ENCODE measurements at regions of chr7 and their contacts with region 1.

Region 1: GRCh38 chr7:55912748-55913158 is 25.5 kb downstream of the ZNF713 start:
- DNase-seq: no peak
- ATAC-seq: no peak
- H3K4me3 ChIP-seq: no peak overlapping the region
- H3K4me3 Mint-ChIP-seq: no peak overlapping the region
- H3K27ac ChIP-seq: no peak overlapping the region
- H3K27ac Mint-ChIP-seq: no peak overlapping the region
- H3K4me1 ChIP-seq: no peaks in the 10 kb centered on the region
- H3K4me1 Mint-ChIP-seq: no peaks in the 10 kb centered on the region
- H3K27me3 ChIP-seq: no peaks in the 10 kb centered on the region
- H3K27me3 Mint-ChIP-seq: no peaks in the 10 kb centered on the region
- CTCF ChIP-seq: no peak

Region 2: GRCh38 chr7:55784151-55784550 is 128.6 kb before region 1 on chr7:
- CTCF ChIA-PET with region 1: no interaction called
- POLR2A ChIA-PET with region 1: no interaction called
- intact Hi-C with region 1: loop called in 1 of 2 experiments (anchors 10 kb)
- DNase-seq: no peak
- ATAC-seq: no peak
- H3K4me3 ChIP-seq: no peak overlapping the region
- H3K4me3 Mint-ChIP-seq: no peak overlapping the region
- H3K27ac ChIP-seq: no peak overlapping the region
- H3K27ac Mint-ChIP-seq: no peak overlapping the region
- H3K4me1 ChIP-seq: no peaks in the 10 kb centered on the region
- H3K4me1 Mint-ChIP-seq: no peaks in the 10 kb centered on the region
- H3K27me3 ChIP-seq: peaks cover 0 to 2% of the 10 kb centered on the region in 2 experiments
- H3K27me3 Mint-ChIP-seq: no peaks in the 10 kb centered on the region
- CTCF ChIP-seq: no peak

Region 3: GRCh38 chr7:55898287-55898686 is 14.5 kb before region 1 on chr7:
- CTCF ChIA-PET with region 1: no interaction called
- POLR2A ChIA-PET with region 1: no interaction called
- intact Hi-C with region 1: no loop called
- DNase-seq: no peak
- ATAC-seq: no peak
- H3K4me3 ChIP-seq: no peak overlapping the region
- H3K4me3 Mint-ChIP-seq: no peak overlapping the region
- H3K27ac ChIP-seq: no peak overlapping the region
- H3K27ac Mint-ChIP-seq: no peak overlapping the region
- H3K4me1 ChIP-seq: no peaks in the 10 kb centered on the region
- H3K4me1 Mint-ChIP-seq: no peaks in the 10 kb centered on the region
- H3K27me3 ChIP-seq: no peaks in the 10 kb centered on the region
- H3K27me3 Mint-ChIP-seq: no peaks in the 10 kb centered on the region
- CTCF ChIP-seq: no peak

Region 4: GRCh38 chr7:56009695-56010094 is 96.9 kb after region 1 on chr7:
- CTCF ChIA-PET with region 1: no interaction called
- POLR2A ChIA-PET with region 1: no interaction called
- intact Hi-C with region 1: no loop called
- DNase-seq: no peak
- ATAC-seq: no peak
- H3K4me3 ChIP-seq: no peak overlapping the region
- H3K4me3 Mint-ChIP-seq: no peak overlapping the region
- H3K27ac ChIP-seq: no peak overlapping the region
- H3K27ac Mint-ChIP-seq: no peak overlapping the region
- H3K4me1 ChIP-seq: no peaks in the 10 kb centered on the region
- H3K4me1 Mint-ChIP-seq: no peaks in the 10 kb centered on the region
- H3K27me3 ChIP-seq: no peaks in the 10 kb centered on the region
- H3K27me3 Mint-ChIP-seq: no peaks in the 10 kb centered on the region
- CTCF ChIP-seq: no peak